Dendritic cell treated with granulocyte-macrophage colony-stimulating factor and Interleukin-4, amounts not matched to agents 40 ng/mL and 50 ng/mL, for 4 days (primary cell): ENCODE measurements at regions of chr17 and their contacts with region 1.

Region 1: GRCh38 chr17:17752089-17752820 is 71.0 kb downstream of the RAI1 start:
- H3K4me3 Mint-ChIP-seq: peak overlapping the region; percentile 85
- H3K27ac Mint-ChIP-seq: peak overlapping the region; percentile 93
- H3K4me1 Mint-ChIP-seq: peaks cover 56% of the 10 kb centered on the region
- H3K27me3 Mint-ChIP-seq: peaks cover 8% of the 10 kb centered on the region

Region 2: DNA sequence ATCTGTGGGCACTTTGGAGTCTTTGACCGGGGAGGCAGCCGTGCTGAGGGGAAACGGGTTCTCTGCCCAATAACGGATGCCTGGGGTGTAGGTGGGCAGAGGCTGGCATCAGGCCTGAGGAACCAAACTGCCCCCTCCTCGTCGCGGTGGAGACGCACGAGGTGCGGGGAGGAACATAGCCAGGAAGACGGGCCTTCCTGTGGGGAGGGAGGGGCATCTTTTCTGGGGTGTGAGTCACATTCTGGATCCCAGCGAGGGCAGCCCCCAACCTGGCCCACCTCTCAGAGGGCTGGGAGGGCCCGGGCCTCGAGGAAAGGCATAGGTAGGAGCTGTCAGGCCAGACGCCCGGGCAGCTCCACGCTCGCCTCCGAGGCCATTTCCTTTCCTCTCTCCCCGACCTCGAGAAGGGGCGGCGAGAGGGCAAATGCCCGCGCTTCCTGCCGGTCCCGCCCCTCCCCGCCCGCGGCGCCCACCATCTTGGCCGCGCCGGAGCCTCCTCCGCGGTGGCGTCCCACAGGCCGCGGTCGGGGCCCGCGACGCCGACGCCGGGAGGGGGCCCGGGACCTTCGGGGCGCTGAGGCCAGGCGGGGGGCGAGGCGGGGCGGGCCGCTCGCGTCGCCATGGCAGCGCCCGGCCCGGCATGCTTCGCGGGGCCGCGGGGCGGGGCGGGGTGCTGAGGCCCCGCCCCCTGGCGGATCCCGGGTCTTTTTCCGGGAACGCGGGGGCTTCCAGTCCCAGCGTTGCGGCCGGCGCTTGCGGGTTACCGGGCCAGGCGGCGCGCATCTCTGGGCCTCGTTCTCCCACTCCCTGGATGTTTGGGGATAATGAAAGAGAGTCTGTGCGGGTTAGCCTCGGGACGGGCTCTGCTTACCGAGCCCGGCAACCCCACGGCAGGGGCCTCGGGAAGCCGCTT is 57.8 kb before region 1 on chr17:
- intact Hi-C with region 1: loop called (anchors 2 kb)
- H3K4me3 Mint-ChIP-seq: peak overlapping the region; percentile 75
- H3K27ac Mint-ChIP-seq: peak overlapping the region; percentile 92
- H3K4me1 Mint-ChIP-seq: peaks cover 73% of the 10 kb centered on the region
- H3K27me3 Mint-ChIP-seq: peaks cover 6% of the 10 kb centered on the region

Region 3: GRCh38 chr17:17704931-17705330 is 47.3 kb before region 1 on chr17:
- intact Hi-C with region 1: no loop called
- H3K4me3 Mint-ChIP-seq: no peak overlapping the region
- H3K27ac Mint-ChIP-seq: no peak overlapping the region
- H3K4me1 Mint-ChIP-seq: peaks cover 50% of the 10 kb centered on the region
- H3K27me3 Mint-ChIP-seq: peaks cover 12% of the 10 kb centered on the region

Region 4: GRCh38 chr17:17972126-17972951 is 220.1 kb after region 1 on chr17 and contains the starts of genes DRC3 and TOM1L2:
- intact Hi-C with region 1: loop called (anchors 5 kb)
- H3K4me3 Mint-ChIP-seq: peak within 1 kb of the TSS; percentile 92
- H3K27ac Mint-ChIP-seq: peak within 1 kb of the TSS; percentile 93
- H3K4me1 Mint-ChIP-seq: peaks cover 52% of the 10 kb centered on the region
- H3K27me3 Mint-ChIP-seq: no peaks in the 10 kb centered on the region